Activated naive CD4-positive, alpha-beta T cell treated with anti-CD3 and anti-CD28 coated beads for 36 hours (primary cell): ENCODE measurements at regions of chr13 and their contacts with region 1.

Region 1: DNA sequence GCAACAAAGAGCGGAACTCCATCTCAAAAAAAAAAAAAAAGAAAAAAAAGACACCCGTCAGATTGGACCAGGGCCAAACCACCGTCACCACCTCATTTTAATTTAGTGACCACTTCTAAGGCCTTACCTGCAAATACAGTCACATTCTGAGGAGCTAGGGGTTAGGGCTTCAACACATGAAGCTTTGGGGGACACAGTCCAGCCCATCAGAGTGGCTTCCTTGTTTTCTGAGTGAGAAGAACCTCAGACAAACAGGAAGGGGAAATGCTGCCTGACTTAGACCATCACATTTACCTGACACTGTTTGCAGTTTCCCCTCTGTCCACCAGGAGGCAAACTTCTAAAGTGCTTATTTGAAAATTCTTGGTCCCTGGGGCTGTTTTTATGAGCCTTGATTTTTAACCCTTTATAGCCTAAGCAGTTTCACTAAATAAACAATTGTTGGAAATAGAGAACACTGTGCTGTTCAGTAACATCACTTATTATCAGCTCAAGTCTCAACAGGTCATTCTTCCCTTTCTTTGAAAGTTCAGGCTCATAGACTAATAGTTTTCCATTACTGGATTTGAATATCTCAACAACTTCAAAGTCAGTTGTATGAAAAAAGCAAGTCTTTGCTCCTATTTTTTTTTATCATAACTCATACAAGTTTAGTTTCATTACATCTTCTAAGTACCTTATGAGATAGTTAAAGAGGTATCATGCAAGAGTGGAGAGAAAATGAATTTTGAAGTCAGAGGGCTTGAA is 74.9 kb upstream of the WASF3 start:
- DNase-seq: peak; percentile 82
- H3K4me3 Mint-ChIP-seq: no peak overlapping the region
- H3K27ac Mint-ChIP-seq: no peak overlapping the region
- H3K4me1 Mint-ChIP-seq: peaks cover 16% of the 10 kb centered on the region
- H3K27me3 Mint-ChIP-seq: no peaks in the 10 kb centered on the region

Region 2: GRCh38 chr13:26494571-26495195 is 12.1 kb after region 1 on chr13:
- CTCF ChIA-PET with region 1: interaction called, 20 read pairs
- intact Hi-C with region 1: loop called (anchors 2 kb)
- DNase-seq: no peak
- H3K4me3 Mint-ChIP-seq: no peak overlapping the region
- H3K27ac Mint-ChIP-seq: no peak overlapping the region
- H3K4me1 Mint-ChIP-seq: no peaks in the 10 kb centered on the region
- H3K27me3 Mint-ChIP-seq: no peaks in the 10 kb centered on the region

Region 3: DNA sequence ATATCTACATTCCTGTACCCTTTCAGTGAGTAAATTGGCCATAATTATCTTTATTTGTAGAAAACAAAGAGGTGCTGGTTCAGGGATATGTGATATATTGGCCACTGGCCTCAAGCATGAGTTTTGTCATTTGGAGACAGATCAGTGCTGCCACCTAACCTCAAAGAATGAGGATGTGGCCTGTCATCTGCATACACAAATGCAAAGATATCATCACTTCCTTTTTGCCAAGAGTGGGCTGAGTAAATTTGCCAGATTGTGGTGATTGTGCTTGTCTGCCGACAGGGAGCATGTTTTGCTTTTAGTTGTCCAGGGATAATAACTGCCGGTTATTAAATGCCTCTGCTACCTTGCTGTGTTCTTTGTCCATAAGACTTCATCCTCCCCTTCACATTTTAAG is 119.0 kb after region 1 on chr13:
- CTCF ChIA-PET with region 1: interaction called, 3 read pairs
- intact Hi-C with region 1: loop called (anchors 2 kb)
- DNase-seq: peak; percentile 18
- H3K4me3 Mint-ChIP-seq: no peak overlapping the region
- H3K27ac Mint-ChIP-seq: no peak overlapping the region
- H3K4me1 Mint-ChIP-seq: no peaks in the 10 kb centered on the region
- H3K27me3 Mint-ChIP-seq: peaks cover 15% of the 10 kb centered on the region

Region 4: GRCh38 chr13:26698392-26699196 is 216.0 kb after region 1 on chr13:
- CTCF ChIA-PET with region 1: interaction called, 26 read pairs
- intact Hi-C with region 1: loop called (anchors 1 kb)
- DNase-seq: peak; percentile 88
- H3K4me3 Mint-ChIP-seq: no peak overlapping the region
- H3K27ac Mint-ChIP-seq: no peak overlapping the region
- H3K4me1 Mint-ChIP-seq: peaks cover 4% of the 10 kb centered on the region
- H3K27me3 Mint-ChIP-seq: no peaks in the 10 kb centered on the region

Region 5: DNA sequence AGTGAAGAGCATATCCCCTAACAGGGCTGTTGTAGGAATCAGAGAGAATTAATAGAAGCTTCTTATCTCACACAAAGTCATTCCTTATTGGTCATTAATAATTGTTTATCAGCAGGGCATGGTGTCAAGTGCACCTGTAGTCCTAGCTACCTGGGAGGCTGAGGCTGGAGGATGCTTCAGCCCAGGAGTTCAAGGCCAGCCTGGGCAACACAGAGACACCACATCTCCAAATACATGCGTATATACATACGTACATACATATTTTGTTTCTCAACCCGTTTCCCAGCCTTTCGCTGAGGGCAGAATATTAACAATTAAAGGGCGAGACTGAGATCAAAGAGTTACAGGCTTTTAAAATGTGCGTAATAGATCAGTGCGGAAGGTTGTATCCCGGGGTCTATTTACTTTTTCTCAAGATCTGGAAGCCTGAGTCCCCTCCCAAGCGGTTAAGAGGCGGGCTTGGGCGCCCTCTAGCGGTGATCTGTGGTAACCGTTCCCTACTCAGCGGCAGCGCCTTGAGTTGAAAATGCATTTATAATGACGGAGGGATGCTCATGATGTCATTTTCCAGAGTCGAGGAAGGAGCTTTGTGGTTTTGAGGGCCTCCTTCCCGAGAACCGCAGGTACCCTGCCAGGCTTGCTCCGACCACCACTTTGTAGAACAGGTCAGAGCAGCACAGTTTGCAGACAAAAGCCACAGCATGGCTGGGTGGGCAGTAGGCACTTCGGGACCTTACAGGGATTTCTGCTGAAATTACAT is 447.5 kb after region 1 on chr13:
- CTCF ChIA-PET with region 1: interaction called, 3 read pairs
- intact Hi-C with region 1: loop called (anchors 1 kb)
- DNase-seq: peak; percentile 79
- H3K4me3 Mint-ChIP-seq: no peak overlapping the region
- H3K27ac Mint-ChIP-seq: no peak overlapping the region
- H3K4me1 Mint-ChIP-seq: no peaks in the 10 kb centered on the region
- H3K27me3 Mint-ChIP-seq: peaks cover 3% of the 10 kb centered on the region